ENCODE measurements at regions of chr3 and their contacts with region 1.

Region 1: GRCh38 chr3:51974963-51975851 is at the start of gene ABHD14A:
- DNase-seq: peak; percentile 70 to 90
- ATAC-seq: peak; percentile 77 to 82 (median 78)
- H3K4me3 ChIP-seq: peak within 1 kb of the TSS; percentile 87
- H3K4me3 Mint-ChIP-seq: peak within 1 kb of the TSS; percentile 99
- H3K27ac ChIP-seq: peak within 1 kb of the TSS; percentile 53
- H3K27ac Mint-ChIP-seq: peak within 1 kb of the TSS; percentile 86 to 90
- H3K4me1 ChIP-seq: peaks cover 41% of the 10 kb centered on the region
- H3K4me1 Mint-ChIP-seq: peaks cover 27 to 36% of the 10 kb centered on the region in 2 donors
- H3K27me3 ChIP-seq: no peaks in the 10 kb centered on the region
- H3K27me3 Mint-ChIP-seq: no peaks in the 10 kb centered on the region
- CTCF ChIP-seq: no peak
- total RNA-seq, gene ABHD14A: 12.0 to 14.7 (median 13.4) TPM

Region 2: DNA sequence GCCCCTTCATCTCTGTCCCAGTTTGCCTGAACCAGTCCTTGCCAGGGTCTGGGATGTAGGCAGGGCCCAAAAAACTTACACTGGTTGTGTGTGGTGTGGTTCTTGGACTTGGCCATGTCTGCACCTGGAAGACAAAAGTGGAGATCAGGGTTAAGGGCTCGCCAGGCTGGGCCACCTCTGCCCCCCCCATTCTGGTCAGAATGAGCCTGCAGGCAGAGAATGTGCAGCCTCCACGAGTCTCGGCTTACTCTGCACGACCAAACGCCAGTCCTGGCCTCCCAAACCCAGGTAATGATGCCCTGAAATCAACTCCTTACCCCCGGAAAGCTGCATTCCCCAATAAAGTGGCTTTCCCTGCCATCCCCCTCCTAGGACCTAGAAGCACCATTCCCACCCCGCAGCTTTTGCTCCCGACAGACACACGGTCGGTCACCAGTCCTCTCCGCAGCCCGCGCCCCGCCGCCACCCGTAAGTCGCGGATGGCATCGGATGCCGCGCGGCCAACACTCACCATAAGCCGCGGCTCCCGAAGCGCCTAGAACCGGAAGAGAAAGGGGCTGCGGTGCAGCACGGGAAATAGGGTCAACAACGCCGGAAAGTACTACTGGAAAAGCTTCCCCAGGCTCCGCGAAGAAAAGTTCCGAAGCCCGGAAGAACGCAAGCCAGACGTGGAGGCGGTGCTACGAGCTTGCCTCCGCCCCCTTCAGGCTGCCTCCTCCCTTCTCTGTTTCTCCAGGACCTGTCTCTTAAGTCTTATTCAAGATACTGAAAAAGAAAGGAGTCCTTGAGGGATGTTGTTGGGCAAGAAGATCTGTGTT is 20.3 kb after region 1 on chr3 and contains the start of gene RPL29:
- intact Hi-C with region 1: loop called (anchors 2 kb)
- DNase-seq: peak; percentile 85 to 97
- ATAC-seq: peak; percentile 97 to 98 (median 97)
- H3K4me3 ChIP-seq: peak within 1 kb of the TSS; percentile 91
- H3K4me3 Mint-ChIP-seq: peak within 1 kb of the TSS; percentile 100
- H3K27ac ChIP-seq: peak within 1 kb of the TSS; percentile 85
- H3K27ac Mint-ChIP-seq: peak within 1 kb of the TSS; percentile 98 to 100
- H3K4me1 ChIP-seq: peaks cover 20% of the 10 kb centered on the region
- H3K4me1 Mint-ChIP-seq: peaks cover 23 to 32% of the 10 kb centered on the region in 2 donors
- H3K27me3 ChIP-seq: no peaks in the 10 kb centered on the region
- H3K27me3 Mint-ChIP-seq: peaks cover 0 to 4% of the 10 kb centered on the region in 2 donors
- CTCF ChIP-seq: no peak
- total RNA-seq, gene RPL29: 486 to 819 (median 797) TPM